ENCODE measurements at regions of chr1 and their contacts with region 1.

Region 1: DNA sequence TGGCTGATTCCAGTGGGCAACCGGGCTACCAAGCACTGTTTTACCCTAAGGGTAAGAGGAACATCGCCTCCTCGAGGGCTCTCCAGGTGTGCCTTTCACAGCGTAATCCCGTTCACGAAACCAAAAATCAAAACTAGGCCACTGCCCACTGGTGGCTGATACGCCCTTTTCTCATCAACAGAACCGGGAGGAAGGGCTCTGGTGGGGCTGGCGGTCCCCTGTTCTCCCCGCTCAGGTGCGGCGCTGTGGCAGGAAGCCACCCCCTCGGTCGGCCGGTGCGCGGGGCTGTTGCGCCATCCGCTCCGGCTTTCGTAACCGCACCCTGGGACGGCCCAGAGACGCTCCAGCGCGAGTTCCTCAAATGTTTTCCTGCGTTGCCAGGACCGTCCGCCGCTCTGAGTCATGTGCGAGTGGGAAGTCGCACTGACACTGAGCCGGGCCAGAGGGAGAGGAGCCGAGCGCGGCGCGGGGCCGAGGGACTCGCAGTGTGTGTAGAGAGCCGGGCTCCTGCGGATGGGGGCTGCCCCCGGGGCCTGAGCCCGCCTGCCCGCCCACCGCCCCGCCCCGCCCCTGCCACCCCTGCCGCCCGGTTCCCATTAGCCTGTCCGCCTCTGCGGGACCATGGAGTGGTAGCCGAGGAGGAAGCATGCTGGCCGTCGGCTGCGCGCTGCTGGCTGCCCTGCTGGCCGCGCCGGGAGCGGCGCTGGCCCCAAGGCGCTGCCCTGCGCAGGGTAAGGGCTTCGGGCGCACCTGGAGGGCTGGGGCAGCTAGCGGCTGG is at the start of gene IL6R:
- DNase-seq: peak; percentile 96 to 97 (median 97)
- ATAC-seq: peak; percentile 93 to 94
- H3K4me3 ChIP-seq: peak within 1 kb of the TSS; percentile 61
- H3K27ac ChIP-seq: peak within 1 kb of the TSS; percentile 95
- H3K4me1 ChIP-seq: peaks cover 14% of the 10 kb centered on the region
- H3K27me3 ChIP-seq: no peaks in the 10 kb centered on the region
- total RNA-seq, gene IL6R: 8.9 to 13.2 (median 12.1) TPM

Region 2: GRCh38 chr1:154352581-154353459 is 52.4 kb before region 1 on chr1:
- intact Hi-C with region 1: loop called in 1 of 4 experiments (anchors 10 kb)
- DNase-seq: peak; percentile 65 to 84 (median 82)
- ATAC-seq: peak; percentile 59 to 74
- H3K4me3 ChIP-seq: peak overlapping the region; percentile 45
- H3K27ac ChIP-seq: peak overlapping the region; percentile 44
- H3K4me1 ChIP-seq: peaks cover 7% of the 10 kb centered on the region
- H3K27me3 ChIP-seq: no peaks in the 10 kb centered on the region